Activated naive CD8-positive, alpha-beta T cell treated with anti-CD3 and anti-CD28 coated beads, Interleukin-2, amount 10 ng/mL, durations not matched to agents 7 days and 5 days (primary cell): ENCODE measurements at regions of chr1 and their contacts with region 1.

Region 1: GRCh38 chr1:12619792-12620487 is 1.9 kb upstream of the DHRS3 start:
- DNase-seq: peak; percentile 87
- ATAC-seq: peak; percentile 20
- H3K4me3 Mint-ChIP-seq: peak overlapping the region; percentile 100
- H3K27ac Mint-ChIP-seq: peak overlapping the region; percentile 100
- H3K4me1 Mint-ChIP-seq: peaks cover 19% of the 10 kb centered on the region
- H3K27me3 Mint-ChIP-seq: no peaks in the 10 kb centered on the region

Region 2: GRCh38 chr1:12384836-12385456 is 235.0 kb before region 1 on chr1:
- POLR2A ChIA-PET with region 1: interaction called, 10 read pairs
- DNase-seq: no peak
- ATAC-seq: peak; percentile 69
- H3K4me3 Mint-ChIP-seq: peak overlapping the region; percentile 29
- H3K27ac Mint-ChIP-seq: peak overlapping the region; percentile 49
- H3K4me1 Mint-ChIP-seq: peaks cover 28% of the 10 kb centered on the region
- H3K27me3 Mint-ChIP-seq: no peaks in the 10 kb centered on the region

Region 3: DNA sequence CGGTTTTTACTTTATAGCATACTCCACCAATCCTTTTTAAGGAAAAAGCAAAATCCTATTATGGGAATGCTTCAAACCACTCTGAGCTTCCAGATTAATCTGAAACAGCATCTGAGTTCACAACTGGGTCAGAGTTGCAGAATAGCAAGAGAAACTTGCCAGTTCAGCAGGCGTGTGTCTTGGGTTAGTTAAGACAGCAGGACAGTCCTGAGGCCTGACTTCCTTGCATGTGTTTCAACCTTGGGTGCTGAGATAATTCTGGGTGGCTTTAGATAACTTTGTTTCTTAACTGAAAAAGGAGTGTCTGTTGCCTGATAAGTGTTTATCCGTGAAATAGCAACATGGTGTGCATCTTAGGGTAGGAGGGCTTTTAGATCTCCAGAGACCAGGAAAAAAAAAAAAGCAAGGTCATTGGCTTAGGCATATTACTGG is 171.2 kb before region 1 on chr1:
- POLR2A ChIA-PET with region 1: interaction called, 16 read pairs
- DNase-seq: no peak
- ATAC-seq: no peak
- H3K4me3 Mint-ChIP-seq: peak overlapping the region; percentile 84
- H3K27ac Mint-ChIP-seq: peak overlapping the region; percentile 98
- H3K4me1 Mint-ChIP-seq: peaks cover 84% of the 10 kb centered on the region
- H3K27me3 Mint-ChIP-seq: no peaks in the 10 kb centered on the region

Region 4: DNA sequence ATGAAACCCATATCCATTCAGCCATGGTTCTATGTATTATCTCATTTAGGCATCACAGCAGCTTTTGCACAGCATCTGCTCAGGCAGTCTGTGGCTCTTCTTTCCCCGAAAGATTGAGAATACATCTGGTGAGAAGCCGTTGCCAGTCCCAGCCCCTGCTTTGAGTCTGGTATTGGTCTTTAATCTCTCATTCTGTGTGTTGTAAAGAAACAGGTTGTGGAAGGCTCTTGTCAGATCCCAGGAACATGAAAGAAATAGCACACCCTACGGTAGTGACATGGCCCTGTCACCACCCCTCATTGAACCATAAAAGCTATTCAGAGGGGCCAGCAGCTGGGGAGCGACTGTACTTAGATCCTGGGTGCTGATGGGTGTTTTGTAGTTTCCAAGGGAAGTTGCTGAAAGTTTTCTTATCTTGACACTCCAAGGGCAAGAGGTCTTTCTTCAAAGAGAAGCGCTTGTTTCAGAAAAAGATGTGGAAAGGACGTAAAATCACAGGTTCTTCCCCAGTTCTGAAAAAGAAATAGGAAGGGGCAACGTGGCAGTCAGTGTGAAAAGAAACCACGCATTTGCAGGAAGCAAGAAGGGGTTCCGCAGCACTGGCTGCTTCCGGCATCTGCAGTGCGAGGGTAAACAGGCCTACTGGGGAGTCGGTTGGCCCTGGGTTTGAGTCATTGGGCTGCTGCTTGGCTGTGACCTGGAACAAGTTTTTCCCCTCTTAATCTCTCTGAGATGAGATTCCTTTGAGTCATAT is 147.0 kb before region 1 on chr1:
- POLR2A ChIA-PET with region 1: interaction called, 65 read pairs
- DNase-seq: peak; percentile 67
- ATAC-seq: peak; percentile 78
- H3K4me3 Mint-ChIP-seq: peak overlapping the region; percentile 68
- H3K27ac Mint-ChIP-seq: peak overlapping the region; percentile 94
- H3K4me1 Mint-ChIP-seq: peaks cover 81% of the 10 kb centered on the region
- H3K27me3 Mint-ChIP-seq: no peaks in the 10 kb centered on the region

Region 5: DNA sequence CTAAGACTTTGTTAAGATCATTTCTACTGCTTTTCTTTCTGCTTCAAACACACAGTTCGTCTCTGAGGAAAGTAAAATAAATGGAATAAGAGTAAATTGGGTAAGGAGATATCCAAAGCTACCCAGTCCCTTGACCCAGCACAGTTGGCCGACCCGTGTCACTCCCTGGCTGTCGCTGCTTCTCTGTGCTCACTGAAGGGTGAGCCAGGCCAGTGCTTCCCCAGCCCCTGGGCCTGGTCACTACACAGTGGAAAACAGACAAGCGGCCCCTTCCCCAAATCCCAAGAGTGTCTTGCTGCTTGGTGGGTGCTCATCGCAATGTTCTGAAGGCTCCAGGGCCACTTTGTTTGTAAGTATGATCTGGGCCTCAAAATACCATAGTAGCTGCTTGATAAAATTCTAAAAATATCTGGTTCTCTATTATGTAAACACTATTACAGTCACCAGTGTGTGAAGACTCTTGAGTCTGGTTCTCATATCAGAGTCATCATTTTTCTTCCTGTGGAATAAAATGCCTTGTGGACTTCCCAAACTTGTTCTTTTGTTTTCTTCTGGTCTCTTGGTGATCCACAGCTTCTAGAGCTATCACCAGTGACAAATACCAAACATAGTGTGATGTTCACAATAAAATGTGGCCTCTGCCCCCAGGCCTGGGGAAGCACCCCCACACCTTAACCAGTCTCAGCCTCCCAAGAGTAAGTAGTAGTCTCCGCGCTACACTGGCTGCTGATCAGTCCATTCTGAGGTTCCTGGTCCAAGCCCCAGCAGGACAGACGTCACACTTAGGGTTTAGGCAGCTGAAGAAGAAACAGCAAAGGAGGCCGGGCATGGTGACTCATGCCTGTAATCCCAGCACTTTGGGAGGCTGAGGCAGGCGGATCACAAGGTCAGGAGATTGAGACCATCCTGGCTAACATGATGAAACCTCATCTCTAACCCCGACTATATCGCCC is 108.1 kb before region 1 on chr1:
- POLR2A ChIA-PET with region 1: interaction called, 56 read pairs
- DNase-seq: no peak
- ATAC-seq: no peak
- H3K4me3 Mint-ChIP-seq: peak overlapping the region; percentile 95
- H3K27ac Mint-ChIP-seq: peak overlapping the region; percentile 100
- H3K4me1 Mint-ChIP-seq: peaks cover 36% of the 10 kb centered on the region
- H3K27me3 Mint-ChIP-seq: no peaks in the 10 kb centered on the region

Region 6: GRCh38 chr1:12604114-12604874 is 15.6 kb before region 1 on chr1:
- POLR2A ChIA-PET with region 1: interaction called, 98 read pairs
- DNase-seq: peak; percentile 41
- ATAC-seq: peak; percentile 96
- H3K4me3 Mint-ChIP-seq: peak overlapping the region; percentile 65
- H3K27ac Mint-ChIP-seq: peak overlapping the region; percentile 75
- H3K4me1 Mint-ChIP-seq: peaks cover 72% of the 10 kb centered on the region
- H3K27me3 Mint-ChIP-seq: no peaks in the 10 kb centered on the region

Region 7: GRCh38 chr1:12637693-12638092 is 17.8 kb after region 1 on chr1:
- POLR2A ChIA-PET with region 1: no interaction called
- DNase-seq: no peak
- ATAC-seq: no peak
- H3K4me3 Mint-ChIP-seq: no peak overlapping the region
- H3K27ac Mint-ChIP-seq: no peak overlapping the region
- H3K4me1 Mint-ChIP-seq: peaks cover 7% of the 10 kb centered on the region
- H3K27me3 Mint-ChIP-seq: peaks cover 5% of the 10 kb centered on the region